ENCODE measurements at regions of chr1 and their contacts with region 1.

Region 1: DNA sequence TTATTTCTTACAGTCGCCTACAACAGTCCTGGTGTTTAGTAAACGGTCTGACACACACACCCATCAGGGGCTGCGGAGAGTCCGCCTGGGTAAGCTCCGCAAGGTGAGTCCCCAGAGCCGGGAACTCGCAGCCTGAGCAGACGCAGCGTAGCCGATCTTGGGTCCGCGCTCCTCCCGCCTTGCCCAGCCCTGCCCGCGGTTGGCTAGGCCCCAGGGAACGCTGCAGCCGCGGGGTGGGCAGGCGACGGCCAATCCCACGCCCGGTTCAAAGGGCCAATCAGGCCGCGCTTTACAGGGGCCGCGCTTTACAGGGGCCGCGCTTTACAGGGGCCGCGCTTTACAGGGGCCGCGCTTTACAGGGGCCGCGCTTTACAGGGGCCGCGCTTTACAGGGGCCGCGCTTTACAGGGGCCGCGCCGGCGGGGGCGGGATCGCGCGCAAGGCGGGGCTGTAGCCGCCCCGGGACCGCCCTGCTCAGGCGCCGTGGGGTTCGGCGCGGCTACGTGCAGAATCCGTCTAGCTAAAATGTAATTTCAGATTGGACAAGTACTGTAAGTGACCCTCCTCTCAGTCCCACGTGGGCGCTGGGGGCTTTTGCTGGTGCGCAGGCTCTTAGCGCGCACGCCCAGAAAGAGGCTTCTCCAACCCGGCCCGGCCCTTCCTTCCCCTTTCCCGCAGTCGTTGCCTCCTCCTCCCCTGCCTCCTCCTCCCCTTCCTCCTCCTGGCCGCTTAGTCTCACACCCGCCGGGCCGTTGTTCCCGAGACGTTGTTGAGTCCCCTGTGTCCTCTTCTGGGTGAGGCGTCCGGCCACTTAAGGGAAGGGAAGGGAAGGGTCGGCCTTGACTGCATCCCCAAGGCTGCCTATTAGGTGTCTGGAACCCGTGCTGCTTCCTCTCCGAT is at the start of gene FGGY:
- DNase-seq: peak; percentile 71 to 85 (median 81)
- ATAC-seq: peak; percentile 93
- H3K4me3 ChIP-seq: peak within 1 kb of the TSS; percentile 73
- H3K4me3 Mint-ChIP-seq: peak within 1 kb of the TSS; percentile 77 to 95 (median 92)
- H3K27ac ChIP-seq: peak within 1 kb of the TSS; percentile 85
- H3K27ac Mint-ChIP-seq: peak within 1 kb of the TSS; percentile 83 to 96 (median 92)
- H3K4me1 ChIP-seq: peaks cover 7 to 11% of the 10 kb centered on the region in 2 donors
- H3K4me1 Mint-ChIP-seq: peaks cover 9 to 51% (median 27%) of the 10 kb centered on the region in 7 donors
- H3K27me3 ChIP-seq: no peaks in the 10 kb centered on the region
- H3K27me3 Mint-ChIP-seq: no peaks in the 10 kb centered on the region
- total RNA-seq, gene FGGY: 10.7 to 15.2 (median 13.9) TPM

Region 2: DNA sequence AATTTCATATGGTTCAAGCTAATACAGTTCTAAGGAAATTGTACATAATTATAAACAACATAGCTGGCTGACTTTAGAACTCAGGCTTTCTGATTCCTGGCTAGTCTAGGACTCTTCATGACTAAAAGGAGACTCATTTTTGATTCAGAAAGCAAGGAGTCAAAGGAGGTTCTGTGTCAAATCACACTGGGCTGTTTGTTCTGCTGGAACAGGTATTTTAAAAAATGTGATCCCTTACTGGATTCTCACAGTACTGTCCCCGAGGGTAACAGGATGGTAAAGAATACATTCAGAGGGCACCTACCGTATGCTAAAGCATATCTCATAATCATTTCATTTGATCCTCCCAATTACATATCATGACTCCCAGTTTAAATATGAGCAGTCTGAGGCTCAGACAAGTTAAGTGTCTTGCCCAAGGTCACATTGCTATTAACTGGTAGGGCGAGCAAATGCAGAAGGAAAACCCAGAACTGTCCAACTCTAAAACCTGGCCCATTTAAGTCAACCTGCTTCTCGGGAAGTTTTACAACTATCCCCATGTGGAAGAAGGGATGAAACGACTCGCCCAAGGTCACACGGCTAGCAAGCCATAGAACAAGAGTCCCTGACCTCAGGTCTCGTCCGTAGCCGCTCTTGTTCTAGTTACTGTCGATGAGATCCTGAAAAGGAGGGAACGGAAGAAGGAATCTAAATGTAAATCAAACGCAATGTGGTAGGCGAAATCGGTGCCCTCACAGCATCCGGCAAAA is 597.4 kb before region 1 on chr1:
- CTCF ChIA-PET with region 1: no interaction called
- POLR2A ChIA-PET with region 1: no interaction called
- intact Hi-C with region 1: loop called (anchors 1 kb)
- DNase-seq: no peak
- ATAC-seq: peak; percentile 4
- H3K4me3 ChIP-seq: peak overlapping the region; percentile 80
- H3K4me3 Mint-ChIP-seq: peak overlapping the region; percentile 92 to 100 (median 98)
- H3K27ac ChIP-seq: peak overlapping the region; percentile 88
- H3K27ac Mint-ChIP-seq: peak overlapping the region; percentile 95 to 100 (median 98)
- H3K4me1 ChIP-seq: peaks cover 13 to 23% of the 10 kb centered on the region in 2 donors
- H3K4me1 Mint-ChIP-seq: peaks cover 4 to 22% (median 13%) of the 10 kb centered on the region in 7 donors
- H3K27me3 ChIP-seq: no peaks in the 10 kb centered on the region
- H3K27me3 Mint-ChIP-seq: peaks cover 0 to 3% (median 0%) of the 10 kb centered on the region in 5 donors

Region 3: DNA sequence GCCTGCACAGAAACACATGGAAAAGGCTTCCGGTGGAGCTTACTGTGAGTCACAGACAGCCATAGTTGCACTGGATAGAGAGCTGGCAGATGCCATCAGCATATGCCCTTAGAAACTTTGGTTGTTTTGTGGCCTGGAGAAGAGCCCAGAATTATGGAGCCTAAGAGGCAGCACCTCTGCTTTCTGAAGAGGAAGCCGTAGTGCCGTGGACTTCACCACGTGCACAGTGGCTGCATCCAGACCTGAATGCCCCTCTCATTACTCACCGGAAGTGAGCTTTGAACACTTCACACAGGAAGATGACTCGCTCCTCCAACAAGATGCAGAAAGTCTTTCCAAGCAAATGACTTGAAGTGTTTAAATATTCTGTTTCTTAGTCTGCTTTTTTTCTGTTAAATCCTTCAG is 541.1 kb before region 1 on chr1:
- CTCF ChIA-PET with region 1: no interaction called
- POLR2A ChIA-PET with region 1: no interaction called
- intact Hi-C with region 1: loop called in 1 of 2 experiments (anchors 10 kb)
- DNase-seq: peak in 6 of 9 donors; percentile 7 to 58 (median 10)
- ATAC-seq: peak; percentile 88
- H3K4me3 ChIP-seq: no peak overlapping the region
- H3K4me3 Mint-ChIP-seq: peak overlapping the region; percentile 64 to 77 (median 70)
- H3K27ac ChIP-seq: peak overlapping the region; percentile 23
- H3K27ac Mint-ChIP-seq: peak overlapping the region; percentile 51 to 86 (median 62)
- H3K4me1 ChIP-seq: peaks cover 27 to 37% of the 10 kb centered on the region in 2 donors
- H3K4me1 Mint-ChIP-seq: peaks cover 27 to 51% (median 40%) of the 10 kb centered on the region in 7 donors
- H3K27me3 ChIP-seq: no peaks in the 10 kb centered on the region
- H3K27me3 Mint-ChIP-seq: no peaks in the 10 kb centered on the region

Region 4: GRCh38 chr1:58903514-58904298 is 392.9 kb before region 1 on chr1:
- CTCF ChIA-PET with region 1: no interaction called
- POLR2A ChIA-PET with region 1: interaction called, 3 read pairs
- intact Hi-C with region 1: loop called in 1 of 2 experiments (anchors 2 kb)
- DNase-seq: peak; percentile 30 to 88 (median 49)
- ATAC-seq: peak; percentile 91
- H3K4me3 ChIP-seq: peak overlapping the region; percentile 60
- H3K4me3 Mint-ChIP-seq: peak overlapping the region; percentile 74 to 86 (median 80)
- H3K27ac ChIP-seq: peak overlapping the region; percentile 63
- H3K27ac Mint-ChIP-seq: peak overlapping the region in 8 of 9 donors; percentile 33 to 91 (median 74)
- H3K4me1 ChIP-seq: peaks cover 4% of the 10 kb centered on the region in 2 donors
- H3K4me1 Mint-ChIP-seq: peaks cover 5 to 38% (median 16%) of the 10 kb centered on the region in 7 donors
- H3K27me3 ChIP-seq: no peaks in the 10 kb centered on the region
- H3K27me3 Mint-ChIP-seq: no peaks in the 10 kb centered on the region

Region 5: GRCh38 chr1:59020151-59020997 is 276.2 kb before region 1 on chr1:
- CTCF ChIA-PET with region 1: no interaction called
- POLR2A ChIA-PET with region 1: no interaction called
- intact Hi-C with region 1: loop called in 1 of 2 experiments (anchors 1 kb)
- DNase-seq: peak; percentile 7 to 58 (median 43)
- ATAC-seq: peak; percentile 88
- H3K4me3 ChIP-seq: peak overlapping the region; percentile 38
- H3K4me3 Mint-ChIP-seq: peak overlapping the region; percentile 80 to 90 (median 84)
- H3K27ac ChIP-seq: peak overlapping the region; percentile 57
- H3K27ac Mint-ChIP-seq: peak overlapping the region; percentile 88 to 99 (median 94)
- H3K4me1 ChIP-seq: peaks cover 11 to 15% of the 10 kb centered on the region in 2 donors
- H3K4me1 Mint-ChIP-seq: peaks cover 16 to 56% (median 25%) of the 10 kb centered on the region in 7 donors
- H3K27me3 ChIP-seq: no peaks in the 10 kb centered on the region
- H3K27me3 Mint-ChIP-seq: no peaks in the 10 kb centered on the region

Region 6: DNA sequence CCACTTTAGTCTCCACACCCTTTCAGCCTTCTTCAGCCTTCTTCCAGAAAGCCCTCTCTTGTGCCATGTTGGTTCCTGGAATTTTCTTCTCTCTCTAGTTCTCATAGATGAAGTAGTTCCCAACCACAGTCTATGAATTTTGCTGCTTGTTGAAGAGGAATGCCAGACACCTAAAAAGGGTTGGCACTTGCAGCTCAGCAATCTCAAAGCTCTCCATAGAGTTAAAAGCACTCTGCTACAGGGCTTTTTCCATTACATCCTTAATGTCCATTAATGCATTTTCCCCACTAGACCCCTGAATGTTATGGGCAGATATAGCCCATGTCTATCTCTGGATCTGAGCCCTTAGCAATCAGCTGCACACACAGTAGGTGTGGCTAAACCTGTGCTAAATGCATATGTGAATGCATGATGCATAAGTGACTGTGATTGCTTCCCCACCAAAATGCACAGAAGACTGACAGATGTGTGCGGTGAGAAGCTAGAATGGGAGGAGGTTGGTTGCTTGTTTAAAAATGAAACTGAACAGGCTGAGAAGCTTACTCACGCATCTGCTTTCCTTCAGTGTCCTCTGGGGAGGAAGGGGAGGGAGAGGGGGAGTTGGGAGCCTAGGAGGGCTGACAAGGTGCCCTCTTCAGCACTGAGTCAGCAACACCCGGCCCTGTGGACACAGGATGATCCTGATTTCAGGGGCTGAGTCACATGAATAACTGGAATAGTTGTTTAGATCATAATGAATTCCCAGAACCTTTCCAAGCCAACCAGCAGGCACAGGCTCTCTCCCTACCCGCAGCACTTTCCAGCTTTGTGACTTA is 145.8 kb before region 1 on chr1:
- CTCF ChIA-PET with region 1: no interaction called
- POLR2A ChIA-PET with region 1: no interaction called
- intact Hi-C with region 1: loop called in 1 of 2 experiments (anchors 5 kb)
- DNase-seq: peak in 1 of 9 donors; percentile 32
- ATAC-seq: no peak
- H3K4me3 ChIP-seq: no peak overlapping the region
- H3K4me3 Mint-ChIP-seq: peak overlapping the region in 2 of 10 donors; percentile 5 to 66
- H3K27ac ChIP-seq: no peak overlapping the region
- H3K27ac Mint-ChIP-seq: peak overlapping the region in 1 of 9 donors; percentile 44
- H3K4me1 ChIP-seq: peaks cover 0 to 5% of the 10 kb centered on the region in 2 donors
- H3K4me1 Mint-ChIP-seq: peaks cover 0 to 45% (median 13%) of the 10 kb centered on the region in 7 donors
- H3K27me3 ChIP-seq: no peaks in the 10 kb centered on the region
- H3K27me3 Mint-ChIP-seq: peaks cover 0 to 9% (median 5%) of the 10 kb centered on the region in 5 donors

Region 7: GRCh38 chr1:59342801-59343575 is 46.4 kb after region 1 on chr1:
- CTCF ChIA-PET with region 1: no interaction called
- POLR2A ChIA-PET with region 1: no interaction called
- intact Hi-C with region 1: no loop called
- DNase-seq: no peak
- ATAC-seq: no peak
- H3K4me3 ChIP-seq: no peak overlapping the region
- H3K4me3 Mint-ChIP-seq: no peak overlapping the region
- H3K27ac ChIP-seq: no peak overlapping the region
- H3K27ac Mint-ChIP-seq: no peak overlapping the region
- H3K4me1 ChIP-seq: no peaks in the 10 kb centered on the region
- H3K4me1 Mint-ChIP-seq: peaks cover 0 to 5% (median 0%) of the 10 kb centered on the region in 7 donors
- H3K27me3 ChIP-seq: no peaks in the 10 kb centered on the region
- H3K27me3 Mint-ChIP-seq: no peaks in the 10 kb centered on the region

Region 8: DNA sequence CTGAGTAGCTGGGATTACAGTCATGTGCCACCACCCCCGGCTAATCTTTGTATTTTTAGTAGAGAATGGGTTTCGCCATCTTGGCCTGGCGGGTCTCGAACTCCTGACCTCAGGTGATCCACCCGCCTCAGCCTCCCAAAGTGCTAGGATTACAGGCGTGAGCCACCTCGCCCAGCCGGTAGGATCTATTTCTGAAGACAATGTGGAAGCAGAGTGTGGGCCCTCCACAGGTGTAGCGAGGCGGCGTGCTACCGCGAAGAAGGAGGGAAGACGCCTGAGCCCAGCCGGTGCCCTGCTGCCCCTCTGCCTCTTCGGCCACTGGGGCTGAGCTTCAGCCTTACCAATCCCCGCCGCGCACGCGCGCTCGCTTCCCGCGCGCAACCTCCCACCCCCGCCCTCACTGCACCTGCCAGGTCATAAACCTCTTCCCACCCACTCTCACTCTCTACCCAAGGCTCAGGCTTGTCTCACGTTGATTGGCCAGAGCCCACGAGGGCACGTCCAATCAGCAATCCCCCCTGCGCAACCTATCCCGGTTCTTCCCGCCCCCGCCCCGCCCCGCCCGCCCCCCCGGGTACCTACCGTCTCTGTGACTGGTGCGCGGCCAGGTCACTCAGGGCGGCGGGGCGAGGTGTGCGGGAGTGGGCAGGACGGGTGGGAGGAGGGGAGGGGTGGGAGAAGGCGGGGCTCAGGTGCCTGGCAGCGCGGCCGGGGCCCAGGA is 517.7 kb after region 1 on chr1:
- CTCF ChIA-PET with region 1: no interaction called
- POLR2A ChIA-PET with region 1: no interaction called
- intact Hi-C with region 1: loop called in 1 of 2 experiments (anchors 2 kb)
- DNase-seq: peak; percentile 65 to 95 (median 90)
- ATAC-seq: peak; percentile 95
- H3K4me3 ChIP-seq: peak overlapping the region; percentile 75
- H3K4me3 Mint-ChIP-seq: peak overlapping the region in 3 of 10 donors; percentile 90 to 92 (median 91)
- H3K27ac ChIP-seq: peak overlapping the region; percentile 91
- H3K27ac Mint-ChIP-seq: peak overlapping the region in 5 of 9 donors; percentile 72 to 95 (median 88)
- H3K4me1 ChIP-seq: peaks cover 0 to 23% of the 10 kb centered on the region in 2 donors
- H3K4me1 Mint-ChIP-seq: peaks cover under 1 to 8% (median 6%) of the 10 kb centered on the region in 7 donors
- H3K27me3 ChIP-seq: no peaks in the 10 kb centered on the region
- H3K27me3 Mint-ChIP-seq: peaks cover 6 to 25% (median 19%) of the 10 kb centered on the region in 5 donors